Dorsolateral prefrontal cortex (tissue), 120 donors: ENCODE measurements at regions of chr11 and their contacts with region 1.

Region 1: DNA sequence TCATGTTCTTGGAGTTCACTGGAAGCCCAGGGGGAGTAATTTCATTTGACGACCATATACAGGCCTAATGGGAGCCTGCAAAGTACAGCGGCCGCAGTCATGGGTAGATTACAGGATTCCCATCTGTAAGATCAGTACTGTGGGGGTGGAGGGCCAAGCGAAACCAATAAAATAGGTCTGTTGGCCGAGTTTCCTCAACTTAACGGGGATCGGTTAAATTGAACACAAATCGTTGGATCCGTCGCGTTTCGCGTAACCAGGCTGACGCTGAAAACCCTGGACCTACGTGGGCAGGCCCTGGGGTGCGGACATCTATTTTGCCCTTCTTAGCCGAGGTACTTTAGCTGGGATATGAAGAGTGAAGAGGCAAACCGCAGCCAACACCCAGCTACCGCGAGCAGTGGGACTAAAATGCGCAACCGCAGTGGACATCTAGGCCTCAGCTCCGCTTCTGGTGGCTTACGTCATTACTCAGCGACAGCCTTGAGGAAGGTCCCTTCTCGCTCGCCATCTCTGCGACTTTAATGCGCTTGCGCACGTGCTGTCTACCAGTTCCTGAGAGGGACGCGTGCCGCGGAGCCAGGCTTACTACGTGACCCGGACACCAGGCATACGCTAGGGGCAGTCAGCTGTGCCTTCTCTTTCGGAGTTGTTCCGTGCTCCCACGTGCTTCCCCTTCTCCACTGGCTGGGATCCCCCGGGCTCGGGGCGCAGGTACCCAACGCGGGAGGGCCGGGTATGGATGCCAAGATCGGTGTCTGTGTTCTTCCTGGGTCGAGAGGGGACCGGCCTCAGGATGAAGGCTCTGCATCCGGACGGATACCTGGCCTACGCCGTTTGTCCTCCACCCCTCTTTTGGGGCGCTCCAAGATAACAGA is at the start of gene NAT10:
- DNase-seq: peak; percentile 90 to 96 (median 94)
- H3K4me3 ChIP-seq: peak within 1 kb of the TSS; percentile 61 to 100 (median 95)
- H3K27ac ChIP-seq: peak within 1 kb of the TSS; percentile 78 to 99 (median 94)
- H3K27me3 ChIP-seq: no peaks in the 10 kb centered on the region
- CTCF ChIP-seq: peak in 37 of 56 donors; percentile 6 to 51 (median 27)
- total RNA-seq, gene NAT10: 41.9 to 72.5 (median 56.0) TPM

Region 2: DNA sequence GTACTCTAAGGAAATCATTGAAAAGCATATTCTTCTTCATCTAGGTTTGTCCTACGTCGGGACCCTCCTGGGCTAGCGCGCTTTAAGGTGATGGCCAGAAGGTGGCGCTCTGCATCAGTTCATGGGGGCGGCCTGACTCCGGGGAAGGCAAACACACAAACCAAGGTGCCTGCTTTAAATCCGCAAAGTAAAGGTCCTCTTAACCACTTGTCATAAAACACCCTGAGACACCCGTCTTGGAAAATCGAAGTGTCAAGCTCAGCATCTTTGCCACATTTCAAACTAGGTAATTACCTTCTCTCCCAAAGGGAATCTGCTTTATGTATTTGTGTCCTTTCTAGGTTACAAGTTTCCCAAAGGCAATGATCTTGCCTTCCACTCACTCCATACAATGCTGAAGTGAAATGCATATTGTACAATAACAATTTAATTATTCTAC is 247.4 kb before region 1 on chr11:
- intact Hi-C with region 1: loop called in 1 of 2 experiments (anchors 5 kb)
- DNase-seq: peak in 9 of 10 donors; percentile 48 to 78 (median 65)
- H3K4me3 ChIP-seq: peak overlapping the region in 1 of 59 donors; percentile 4
- H3K27ac ChIP-seq: peak overlapping the region in 1 of 59 donors; percentile 32
- H3K27me3 ChIP-seq: peaks cover 0 to 7% (median 0%) of the 10 kb centered on the region in 45 donors
- CTCF ChIP-seq: peak; percentile 64 to 96 (median 90)

Region 3: GRCh38 chr11:33996498-33997454 is 108.5 kb before region 1 on chr11:
- intact Hi-C with region 1: loop called (anchors 2 kb)
- DNase-seq: peak; percentile 31 to 72 (median 60)
- H3K4me3 ChIP-seq: peak overlapping the region in 45 of 59 donors; percentile 1 to 50 (median 30)
- H3K27ac ChIP-seq: peak overlapping the region in 17 of 59 donors; percentile 7 to 65 (median 41)
- H3K27me3 ChIP-seq: peaks cover 0 to 3% (median 0%) of the 10 kb centered on the region in 45 donors
- CTCF ChIP-seq: peak; percentile 54 to 93 (median 87)

Region 4: DNA sequence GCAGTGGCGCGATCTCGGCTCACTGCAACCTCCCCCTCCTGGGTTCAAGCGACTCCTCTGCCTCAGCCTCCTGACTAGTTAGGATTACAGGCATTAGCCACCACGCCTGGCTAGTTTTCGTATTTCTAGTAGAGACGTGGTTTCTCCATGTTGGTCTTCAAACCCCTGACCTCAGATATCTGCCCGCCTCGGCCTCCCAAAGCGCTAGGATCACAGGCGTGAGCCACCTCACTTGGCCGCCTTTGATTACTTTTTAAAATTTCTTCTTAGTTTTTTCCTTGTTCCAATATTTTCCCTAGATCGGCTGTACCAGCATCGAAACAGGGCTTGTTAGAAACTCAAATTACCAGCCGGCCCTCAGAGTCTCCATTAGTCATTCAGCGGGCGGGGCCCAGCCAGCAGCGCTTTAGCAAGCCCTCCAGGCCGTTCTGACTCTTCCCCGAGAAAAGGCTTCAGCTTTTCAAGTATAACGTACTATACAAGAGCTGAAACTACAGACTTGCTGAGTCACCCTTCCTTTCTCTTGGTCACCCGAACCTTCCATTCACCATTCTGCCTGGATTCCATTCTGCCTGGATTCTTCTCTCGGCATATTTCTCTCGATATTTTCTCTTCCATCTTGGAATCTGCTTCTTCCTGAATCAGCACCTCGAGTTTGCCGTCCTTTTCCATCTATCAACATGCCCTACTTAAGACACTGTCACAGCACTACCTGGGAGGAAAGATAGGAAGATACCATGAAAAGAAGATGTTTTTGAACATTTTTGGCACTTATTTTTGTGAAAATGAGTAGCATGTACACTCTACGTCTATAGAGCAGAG is 60.4 kb before region 1 on chr11:
- intact Hi-C with region 1: no loop called
- DNase-seq: no peak
- H3K4me3 ChIP-seq: no peak overlapping the region
- H3K27ac ChIP-seq: no peak overlapping the region
- H3K27me3 ChIP-seq: no peaks in the 10 kb centered on the region
- CTCF ChIP-seq: no peak

Region 5: DNA sequence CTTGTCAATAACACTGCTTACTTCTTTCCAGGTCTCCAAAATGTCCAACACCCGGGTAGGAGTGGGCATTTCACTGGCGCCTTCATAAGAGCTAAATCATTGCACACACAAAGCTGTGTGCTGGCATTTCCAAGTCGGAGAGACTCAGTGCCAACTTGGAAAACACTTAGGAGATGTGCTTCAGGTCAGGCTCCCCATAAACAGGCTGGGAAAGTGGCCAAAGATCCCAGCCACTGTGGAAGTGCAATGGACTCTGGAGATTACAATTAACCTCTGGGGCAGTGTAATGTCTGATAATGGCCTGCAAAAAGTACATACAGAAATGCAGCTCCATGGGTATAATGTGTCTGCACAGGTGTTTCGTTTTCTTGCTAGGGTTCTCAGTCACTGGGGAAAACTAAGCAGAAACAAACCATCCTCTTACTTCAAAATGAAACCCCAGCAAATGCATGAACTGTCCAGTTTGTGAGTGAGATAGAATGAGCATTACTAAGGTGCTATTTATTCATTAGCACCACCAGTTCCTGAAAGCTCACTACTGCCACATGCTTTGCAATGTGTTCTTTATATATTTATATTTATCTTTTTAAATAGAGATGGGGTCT is 173.5 kb after region 1 on chr11:
- intact Hi-C with region 1: no loop called
- DNase-seq: no peak
- H3K4me3 ChIP-seq: no peak overlapping the region
- H3K27ac ChIP-seq: no peak overlapping the region
- H3K27me3 ChIP-seq: no peaks in the 10 kb centered on the region
- CTCF ChIP-seq: no peak

Region 6: DNA sequence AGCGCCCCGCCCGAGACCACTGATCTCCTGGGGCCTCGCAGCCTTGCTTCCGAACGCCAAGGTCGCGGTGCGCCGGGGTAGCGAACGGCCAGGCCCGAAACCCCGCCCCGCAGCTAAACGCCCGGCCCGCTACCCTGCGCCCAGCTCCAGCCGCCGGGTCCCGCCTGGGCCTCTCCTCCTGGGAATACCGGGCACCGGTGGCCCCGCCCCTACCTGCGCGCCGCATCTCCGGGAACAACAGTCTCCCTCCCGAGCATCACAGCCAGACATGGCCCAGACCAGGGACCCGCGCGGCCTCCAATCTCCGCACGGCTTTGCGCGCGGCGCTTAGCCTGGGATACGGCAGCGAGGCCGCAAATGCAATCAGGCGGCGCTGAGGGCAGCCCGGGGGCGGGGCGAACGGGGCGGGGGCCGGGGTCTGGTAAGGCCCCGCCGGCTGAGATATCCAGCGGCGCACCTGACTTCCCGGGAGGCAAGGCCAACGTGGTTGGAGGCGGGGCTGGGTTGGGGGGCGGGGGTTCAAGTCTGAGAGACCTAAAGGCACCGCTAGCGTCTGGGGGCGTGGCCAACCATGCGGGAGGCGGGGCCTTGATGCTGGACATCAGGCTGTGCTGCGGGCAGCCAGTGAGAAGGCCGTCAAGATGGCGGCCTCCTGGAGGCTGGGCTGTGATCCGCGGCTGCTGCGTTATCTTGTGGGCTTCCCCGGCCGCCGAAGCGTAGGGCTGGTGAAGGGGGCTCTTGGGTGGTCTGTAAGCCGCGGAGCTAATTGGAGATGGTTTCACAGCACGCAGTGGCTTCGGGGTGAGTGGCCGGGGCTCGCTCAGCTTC is 810.9 kb after region 1 on chr11 and contains the starts of genes APIP and PDHX:
- intact Hi-C with region 1: loop called in 1 of 2 experiments (anchors 10 kb)
- DNase-seq: peak; percentile 93 to 99 (median 98)
- H3K4me3 ChIP-seq: peak within 1 kb of the TSS; percentile 44 to 99 (median 92)
- H3K27ac ChIP-seq: peak within 1 kb of the TSS; percentile 21 to 97 (median 92)
- H3K27me3 ChIP-seq: no peaks in the 10 kb centered on the region
- CTCF ChIP-seq: peak in 29 of 56 donors; percentile 6 to 49 (median 27)
- total RNA-seq, gene APIP: 11.1 to 52.7 (median 26.0) TPM
- total RNA-seq, gene PDHX: 36.8 to 111 (median 73.7) TPM